Panc1 (cell line): ENCODE measurements at regions of chr17 and their contacts with region 1.

Region 1: DNA sequence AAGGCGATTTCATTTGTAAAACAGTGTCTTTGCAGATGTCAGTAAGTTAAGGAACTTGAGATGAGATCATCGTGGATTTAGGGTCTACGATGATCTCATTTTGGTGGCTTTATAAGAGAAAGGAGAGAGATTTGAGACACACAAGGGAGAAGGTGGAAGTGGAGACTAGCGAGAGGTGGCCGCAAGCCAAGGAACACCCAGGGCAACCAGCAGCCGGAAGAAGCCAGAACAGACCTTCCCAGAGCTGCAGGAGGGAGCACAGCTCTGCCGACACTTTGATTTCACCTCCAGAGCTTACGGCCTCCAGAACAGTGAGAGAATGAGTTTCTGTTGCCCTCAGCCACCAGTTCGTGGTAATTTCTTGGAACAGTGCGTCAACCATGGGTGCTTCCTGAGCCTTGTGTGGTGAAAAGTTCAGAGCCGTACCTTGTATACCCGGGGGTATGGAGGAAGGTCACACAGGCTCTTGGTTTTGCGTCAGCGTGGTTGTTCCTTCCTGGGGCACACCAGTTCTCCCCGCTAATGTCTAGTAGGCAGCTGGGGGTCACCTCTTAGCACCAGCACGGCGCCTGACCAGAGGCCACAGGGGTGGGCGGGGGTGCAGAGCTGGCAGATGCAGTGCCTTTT is 12.9 kb upstream of the SEC14L1 start:
- DNase-seq: no peak
- ATAC-seq: peak; percentile 20
- H3K4me3 ChIP-seq: peak overlapping the region; percentile 15 to 38; a peak in 3 of 4 replicates
- H3K27ac ChIP-seq: peak overlapping the region; percentile 95
- H3K4me1 ChIP-seq: peaks cover 95% of the 10 kb centered on the region
- H3K27me3 ChIP-seq: no peaks in the 10 kb centered on the region
- CTCF ChIP-seq: no peak

Region 2: GRCh38 chr17:77027271-77027670 is 100.6 kb before region 1 on chr17:
- CTCF ChIA-PET with region 1: no interaction called
- POLR2A ChIA-PET with region 1: no interaction called
- in situ Hi-C with region 1: no loop called
- intact Hi-C with region 1: no loop called
- DNase-seq: no peak
- ATAC-seq: no peak
- H3K4me3 ChIP-seq: no peak overlapping the region
- H3K27ac ChIP-seq: no peak overlapping the region
- H3K4me1 ChIP-seq: no peaks in the 10 kb centered on the region
- H3K27me3 ChIP-seq: no peaks in the 10 kb centered on the region
- CTCF ChIP-seq: no peak

Region 3: GRCh38 chr17:77045441-77046091 is 82.3 kb before region 1 on chr17:
- CTCF ChIA-PET with region 1: no interaction called
- POLR2A ChIA-PET with region 1: no interaction called
- in situ Hi-C with region 1: no loop called
- intact Hi-C with region 1: no loop called
- DNase-seq: no peak
- ATAC-seq: no peak
- H3K4me3 ChIP-seq: no peak overlapping the region
- H3K27ac ChIP-seq: no peak overlapping the region
- H3K4me1 ChIP-seq: no peaks in the 10 kb centered on the region
- H3K27me3 ChIP-seq: no peaks in the 10 kb centered on the region
- CTCF ChIP-seq: no peak

Region 4: DNA sequence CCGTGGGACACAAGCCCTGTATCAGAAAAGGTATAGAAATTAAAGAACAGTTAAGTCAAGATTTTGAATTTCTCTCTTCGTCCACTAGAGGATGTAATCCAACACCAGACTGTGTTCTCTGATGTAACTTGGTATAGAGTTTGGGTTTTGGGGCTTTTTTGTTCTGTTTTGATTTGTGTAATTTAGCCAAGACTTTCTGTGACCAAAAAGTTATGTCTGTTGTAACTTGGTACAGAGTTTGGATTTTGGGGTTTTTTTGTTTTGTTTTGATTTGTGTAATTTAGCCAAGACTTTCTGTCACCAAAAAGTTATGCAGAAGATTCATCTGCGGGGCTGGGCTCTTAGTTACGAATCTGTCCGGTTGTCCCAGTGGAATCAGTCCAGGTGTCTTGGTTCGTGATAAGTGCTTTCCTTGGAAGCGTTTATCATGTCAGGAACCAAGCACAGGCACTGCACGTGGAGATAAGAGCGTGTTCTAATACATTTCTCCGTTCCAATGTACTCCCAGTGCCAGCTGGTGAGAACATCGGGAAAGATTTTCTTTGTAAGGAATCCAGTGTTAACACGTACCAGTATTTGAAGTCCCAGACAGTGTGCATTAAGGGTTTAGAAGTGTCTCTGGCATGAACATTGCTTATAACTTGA is 31.2 kb before region 1 on chr17:
- CTCF ChIA-PET with region 1: no interaction called
- POLR2A ChIA-PET with region 1: interaction called, 4 read pairs
- in situ Hi-C with region 1: no loop called
- intact Hi-C with region 1: loop called (anchors 5 kb)
- DNase-seq: peak; percentile 41
- ATAC-seq: no peak; the same call in 1 of the 2 replicates
- H3K4me3 ChIP-seq: no peak overlapping the region
- H3K27ac ChIP-seq: peak overlapping the region; percentile 81
- H3K4me1 ChIP-seq: peaks cover 18% of the 10 kb centered on the region; the same call in 1 of the 2 replicates
- H3K27me3 ChIP-seq: no peaks in the 10 kb centered on the region
- CTCF ChIP-seq: peak; percentile 94

Region 5: GRCh38 chr17:77109764-77110359 is 18.0 kb before region 1 on chr17:
- CTCF ChIA-PET with region 1: no interaction called
- POLR2A ChIA-PET with region 1: interaction called, 10 read pairs
- in situ Hi-C with region 1: no loop called
- intact Hi-C with region 1: no loop called
- DNase-seq: no peak
- ATAC-seq: no peak
- H3K4me3 ChIP-seq: no peak overlapping the region
- H3K27ac ChIP-seq: peak overlapping the region; percentile 86
- H3K4me1 ChIP-seq: peaks cover 18% of the 10 kb centered on the region
- H3K27me3 ChIP-seq: no peaks in the 10 kb centered on the region
- CTCF ChIP-seq: no peak

Region 6: GRCh38 chr17:77140166-77140878 is 12.5 kb after region 1 on chr17:
- CTCF ChIA-PET with region 1: no interaction called
- POLR2A ChIA-PET with region 1: interaction called, 30 read pairs
- in situ Hi-C with region 1: no loop called
- intact Hi-C with region 1: no loop called
- DNase-seq: peak; percentile 62
- ATAC-seq: peak; percentile 92
- H3K4me3 ChIP-seq: peak overlapping the region; percentile 46 to 50
- H3K27ac ChIP-seq: peak overlapping the region; percentile 96
- H3K4me1 ChIP-seq: peaks cover 40% of the 10 kb centered on the region
- H3K27me3 ChIP-seq: no peaks in the 10 kb centered on the region
- CTCF ChIP-seq: no peak

Region 7: GRCh38 chr17:77145612-77146245 is 17.9 kb after region 1 on chr17:
- CTCF ChIA-PET with region 1: no interaction called
- POLR2A ChIA-PET with region 1: interaction called, 30 read pairs
- in situ Hi-C with region 1: no loop called
- intact Hi-C with region 1: no loop called
- DNase-seq: no peak
- ATAC-seq: peak; percentile 67
- H3K4me3 ChIP-seq: peak overlapping the region; percentile 9 to 38
- H3K27ac ChIP-seq: peak overlapping the region; percentile 99
- H3K4me1 ChIP-seq: peaks cover 79% of the 10 kb centered on the region
- H3K27me3 ChIP-seq: no peaks in the 10 kb centered on the region
- CTCF ChIP-seq: no peak

Region 8: DNA sequence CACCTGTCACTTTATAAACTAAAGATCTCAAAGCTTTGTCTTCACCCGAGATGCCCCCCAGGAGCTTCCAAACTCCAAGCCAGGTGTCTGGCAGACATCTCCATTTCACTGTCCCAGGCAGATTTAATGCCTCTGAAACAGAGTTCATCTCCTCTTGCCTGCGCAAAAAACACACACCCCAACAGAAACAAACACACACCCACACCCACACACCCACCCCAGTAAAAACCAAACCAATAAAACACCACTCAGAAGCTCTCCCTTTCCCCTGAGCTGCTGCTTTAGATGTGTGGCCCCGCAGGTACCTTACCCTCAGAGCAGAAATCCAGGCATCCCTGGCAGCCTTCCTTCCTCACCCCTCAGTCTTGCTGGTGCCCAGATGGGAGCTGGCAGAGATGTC is 27.3 kb after region 1 on chr17:
- CTCF ChIA-PET with region 1: no interaction called
- POLR2A ChIA-PET with region 1: interaction called, 10 read pairs
- in situ Hi-C with region 1: loop called (anchors 5 kb)
- intact Hi-C with region 1: no loop called
- DNase-seq: no peak
- ATAC-seq: no peak
- H3K4me3 ChIP-seq: no peak overlapping the region
- H3K27ac ChIP-seq: no peak overlapping the region; the same call in 1 of the 2 replicates
- H3K4me1 ChIP-seq: peaks cover 51% of the 10 kb centered on the region
- H3K27me3 ChIP-seq: no peaks in the 10 kb centered on the region
- CTCF ChIP-seq: no peak

Region 9: DNA sequence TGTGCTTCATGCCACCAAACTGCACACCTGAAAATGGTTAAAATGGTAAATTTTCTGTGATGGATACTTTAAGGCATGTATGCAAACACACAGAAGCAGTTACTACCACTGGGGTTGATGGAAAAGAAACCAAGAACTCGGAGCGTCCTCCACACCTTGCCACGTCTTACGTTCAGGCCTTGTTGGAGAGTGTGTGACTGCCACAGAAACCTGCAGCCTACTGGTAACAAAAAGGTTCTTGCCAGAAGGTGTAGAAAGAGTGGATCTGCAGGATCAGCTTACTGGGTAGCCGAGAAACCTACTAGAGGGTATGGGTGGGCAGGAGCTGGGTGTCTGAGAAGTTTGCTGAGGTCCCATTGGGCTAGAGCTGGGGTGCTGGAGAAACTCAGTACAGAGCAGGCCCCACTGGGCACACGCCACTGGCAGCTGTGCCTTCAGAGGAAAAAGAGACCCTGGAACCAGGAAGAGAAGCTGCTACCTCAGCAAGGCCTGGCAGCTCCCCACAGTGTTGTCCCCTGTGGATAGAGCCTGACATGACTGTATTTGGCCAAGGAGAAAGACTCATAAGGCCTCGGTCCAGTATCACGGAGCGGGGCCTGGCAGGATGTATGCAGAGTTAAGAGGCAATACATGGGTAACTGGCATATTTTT is 217.5 kb after region 1 on chr17:
- CTCF ChIA-PET with region 1: no interaction called
- POLR2A ChIA-PET with region 1: no interaction called
- in situ Hi-C with region 1: no loop called
- intact Hi-C with region 1: no loop called
- DNase-seq: no peak
- ATAC-seq: peak; percentile 58
- H3K4me3 ChIP-seq: no peak overlapping the region
- H3K27ac ChIP-seq: no peak overlapping the region
- H3K4me1 ChIP-seq: peaks cover 29% of the 10 kb centered on the region
- H3K27me3 ChIP-seq: no peaks in the 10 kb centered on the region
- CTCF ChIP-seq: no peak